Ovary (tissue), 10 donors: ENCODE measurements at regions of chr6 and their contacts with region 1.

Region 1: GRCh38 chr6:36546920-36547645 is at the start of gene STK38:
- DNase-seq: peak; percentile 93 to 97 (median 95)
- H3K4me3 ChIP-seq: peak within 1 kb of the TSS; percentile 93
- H3K27ac ChIP-seq: peak within 1 kb of the TSS; percentile 85 to 90
- H3K4me1 ChIP-seq: peaks cover 9% of the 10 kb centered on the region
- H3K27me3 ChIP-seq: no peaks in the 10 kb centered on the region
- CTCF ChIP-seq: no peak
- EP300 ChIP-seq: peak; percentile 12
- POLR2A ChIP-seq: peak; percentile 98
- total RNA-seq, gene STK38: 8.9 to 24.2 (median 15.5) TPM

Region 2: GRCh38 chr6:36442671-36443470 is 104.2 kb before region 1 on chr6 and contains the starts of genes KCTD20 and PXT1:
- intact Hi-C with region 1: loop called in 3 of 4 experiments (anchors 1 to 10 kb)
- DNase-seq: peak; percentile 85 to 91 (median 89)
- H3K4me3 ChIP-seq: peak within 1 kb of the TSS; percentile 78
- H3K27ac ChIP-seq: peak within 1 kb of the TSS; percentile 94 to 95
- H3K4me1 ChIP-seq: peaks cover 15% of the 10 kb centered on the region
- H3K27me3 ChIP-seq: no peaks in the 10 kb centered on the region
- CTCF ChIP-seq: peak in 1 of 3 donors; percentile 16
- EP300 ChIP-seq: no peak
- POLR2A ChIP-seq: peak; percentile 79
- total RNA-seq, gene KCTD20: 33.3 to 73.7 (median 46.2) TPM
- total RNA-seq, gene PXT1: not detected

Region 3: GRCh38 chr6:36499918-36500317 is 47.2 kb before region 1 on chr6:
- intact Hi-C with region 1: loop called in 1 of 4 experiments (anchors 5 kb)
- DNase-seq: no peak
- H3K4me3 ChIP-seq: no peak overlapping the region
- H3K27ac ChIP-seq: no peak overlapping the region
- H3K4me1 ChIP-seq: no peaks in the 10 kb centered on the region
- H3K27me3 ChIP-seq: no peaks in the 10 kb centered on the region
- CTCF ChIP-seq: no peak
- EP300 ChIP-seq: no peak
- POLR2A ChIP-seq: no peak

Region 4: DNA sequence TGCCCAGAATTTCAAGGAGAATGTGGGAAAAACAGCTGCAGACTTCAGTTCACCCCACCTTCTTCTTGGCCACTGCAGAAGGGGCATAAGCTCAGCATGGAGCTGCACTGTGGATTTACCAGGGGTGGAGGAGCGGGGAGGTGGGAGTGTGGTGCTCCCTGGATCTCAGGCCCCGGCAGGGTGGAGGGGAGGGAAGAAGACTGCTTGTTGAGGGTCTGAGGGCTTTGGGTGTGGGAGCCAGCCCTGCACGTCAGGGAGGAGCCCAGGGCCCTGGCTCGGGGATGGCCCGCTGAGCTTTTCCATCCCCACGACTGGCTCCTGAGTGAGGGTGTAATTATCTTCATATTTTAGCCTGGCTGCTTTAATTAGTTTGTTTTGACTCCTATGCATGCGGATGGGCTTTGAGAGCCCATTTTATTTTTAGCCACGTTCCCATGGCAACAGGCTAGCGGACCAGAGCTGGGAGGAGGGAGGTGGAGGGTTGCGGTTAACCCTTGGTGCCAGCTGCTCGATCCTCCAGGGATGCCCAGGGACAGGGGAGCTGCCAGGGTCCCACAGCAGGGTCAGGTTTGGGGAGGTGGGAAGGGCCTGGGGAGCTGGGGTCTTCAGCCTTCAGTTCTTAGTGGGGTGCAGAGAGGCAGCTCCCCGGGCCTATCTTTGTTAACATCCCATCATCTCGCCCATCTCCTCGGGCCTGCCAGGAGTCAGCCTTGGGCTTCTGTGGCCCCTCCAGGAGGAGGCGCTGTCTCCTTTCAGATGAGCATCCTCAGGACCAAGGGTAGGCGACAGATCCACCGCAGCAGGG is 218.7 kb after region 1 on chr6:
- intact Hi-C with region 1: no loop called
- DNase-seq: peak; percentile 78 to 88 (median 82)
- H3K4me3 ChIP-seq: no peak overlapping the region
- H3K27ac ChIP-seq: peak overlapping the region in 1 of 2 donors; percentile 5
- H3K4me1 ChIP-seq: peaks cover 11% of the 10 kb centered on the region
- H3K27me3 ChIP-seq: no peaks in the 10 kb centered on the region
- CTCF ChIP-seq: peak; percentile 19 to 84 (median 83)
- EP300 ChIP-seq: no peak
- POLR2A ChIP-seq: no peak